ENCODE measurements at regions of chr12 and their contacts with region 1.

Region 1: GRCh38 chr12:70305794-70306193 is 60.3 kb upstream of the KCNMB4 start:
- DNase-seq: no peak
- ATAC-seq: no peak
- H3K4me3 ChIP-seq: no peak overlapping the region
- H3K27ac ChIP-seq: peak overlapping the region in 2 of 12 donors; percentile 17 to 37
- H3K4me1 ChIP-seq: peaks cover 0 to 8% (median 0%) of the 10 kb centered on the region in 12 donors
- H3K27me3 ChIP-seq: no peaks in the 10 kb centered on the region
- CTCF ChIP-seq: no peak
- POLR2A ChIP-seq: no peak

Region 2: GRCh38 chr12:70359458-70360197 is 53.8 kb after region 1 on chr12:
- intact Hi-C with region 1: loop called in 1 of 10 experiments (anchors 2 kb)
- DNase-seq: no peak
- ATAC-seq: no peak
- H3K4me3 ChIP-seq: no peak overlapping the region
- H3K27ac ChIP-seq: peak overlapping the region in 1 of 12 donors; percentile 4
- H3K4me1 ChIP-seq: peaks cover 0 to 11% (median 0%) of the 10 kb centered on the region in 12 donors
- H3K27me3 ChIP-seq: peaks cover 0 to 10% (median 0%) of the 10 kb centered on the region in 9 donors
- CTCF ChIP-seq: no peak
- POLR2A ChIP-seq: no peak

Measured in heart left ventricle (tissue), 16 donors.